AG04449 (cell line): ENCODE measurements at regions of chr1 and their contacts with region 1.

Region 1: DNA sequence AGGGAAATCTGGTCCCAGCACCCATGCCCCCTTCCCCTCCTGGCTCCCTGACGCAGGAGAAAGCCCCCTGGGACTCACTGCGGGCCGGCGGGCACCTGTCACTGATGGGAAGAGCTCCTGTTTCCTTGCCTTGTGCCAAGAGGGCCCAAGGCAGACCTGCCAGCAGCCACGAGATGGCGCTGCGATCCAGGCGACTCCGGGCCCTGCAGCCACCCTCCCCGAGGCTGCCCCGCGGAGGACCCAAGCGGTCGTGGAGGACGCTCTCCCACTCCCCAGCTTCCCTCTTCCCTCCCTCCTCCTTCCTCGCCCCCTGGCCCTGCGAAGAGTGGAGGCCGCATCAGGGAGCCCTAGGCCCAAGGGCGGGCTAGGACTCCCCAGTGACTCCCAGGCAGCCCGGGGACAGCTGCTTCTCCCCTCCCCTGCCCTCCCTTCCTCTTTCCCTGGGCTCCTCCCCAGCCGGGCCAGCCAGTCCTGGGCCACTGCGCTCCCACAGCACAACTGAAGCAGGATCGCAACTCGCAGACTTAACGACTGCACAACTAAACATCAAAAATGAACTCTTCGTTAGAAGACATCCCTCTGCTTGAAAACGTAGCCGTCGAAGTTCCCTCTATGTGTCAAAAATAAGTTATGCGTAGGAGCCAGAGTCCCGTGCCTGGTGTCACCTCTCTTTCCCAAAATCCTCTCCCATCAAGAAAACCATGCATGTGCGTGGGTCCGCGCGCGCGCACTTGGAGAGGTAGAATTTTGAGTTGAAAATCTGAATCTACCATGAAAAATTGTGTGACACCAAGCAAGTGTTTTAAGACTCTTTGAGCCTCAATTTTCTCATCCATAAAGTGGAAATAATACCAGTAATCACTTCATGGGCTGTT is 34.2 kb downstream of the BATF3 start:
- DNase-seq: no peak
- H3K4me3 ChIP-seq: peak overlapping the region; percentile 80
- CTCF ChIP-seq: peak; percentile 99

Region 2: DNA sequence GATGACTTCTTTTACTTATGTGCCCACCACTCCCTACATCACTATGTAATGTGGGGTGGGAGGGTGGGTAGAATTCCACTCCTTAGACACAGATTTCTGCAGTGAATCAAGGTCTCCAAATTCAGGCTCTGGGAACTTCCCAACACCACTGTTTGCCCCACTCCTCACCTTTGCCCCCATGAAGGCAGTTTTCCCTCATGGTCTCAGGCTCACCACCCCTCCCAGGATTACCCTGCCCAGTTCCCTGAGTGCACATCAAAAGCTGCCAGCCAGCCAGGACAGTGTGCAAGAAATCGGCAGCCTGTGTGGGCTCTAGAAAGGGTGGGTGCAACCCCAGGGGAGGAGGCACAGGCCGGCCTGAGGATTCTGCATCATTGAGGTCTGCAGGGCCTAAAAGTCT is 218.0 kb before region 1 on chr1:
- CTCF ChIA-PET with region 1: no interaction called
- POLR2A ChIA-PET with region 1: no interaction called
- DNase-seq: no peak
- H3K4me3 ChIP-seq: no peak overlapping the region
- CTCF ChIP-seq: no peak

Region 3: GRCh38 chr1:212477014-212477679 is 188.3 kb before region 1 on chr1:
- CTCF ChIA-PET with region 1: interaction called, 23 read pairs
- POLR2A ChIA-PET with region 1: no interaction called
- DNase-seq: peak; percentile 38
- H3K4me3 ChIP-seq: no peak overlapping the region
- CTCF ChIP-seq: peak; percentile 91

Region 4: DNA sequence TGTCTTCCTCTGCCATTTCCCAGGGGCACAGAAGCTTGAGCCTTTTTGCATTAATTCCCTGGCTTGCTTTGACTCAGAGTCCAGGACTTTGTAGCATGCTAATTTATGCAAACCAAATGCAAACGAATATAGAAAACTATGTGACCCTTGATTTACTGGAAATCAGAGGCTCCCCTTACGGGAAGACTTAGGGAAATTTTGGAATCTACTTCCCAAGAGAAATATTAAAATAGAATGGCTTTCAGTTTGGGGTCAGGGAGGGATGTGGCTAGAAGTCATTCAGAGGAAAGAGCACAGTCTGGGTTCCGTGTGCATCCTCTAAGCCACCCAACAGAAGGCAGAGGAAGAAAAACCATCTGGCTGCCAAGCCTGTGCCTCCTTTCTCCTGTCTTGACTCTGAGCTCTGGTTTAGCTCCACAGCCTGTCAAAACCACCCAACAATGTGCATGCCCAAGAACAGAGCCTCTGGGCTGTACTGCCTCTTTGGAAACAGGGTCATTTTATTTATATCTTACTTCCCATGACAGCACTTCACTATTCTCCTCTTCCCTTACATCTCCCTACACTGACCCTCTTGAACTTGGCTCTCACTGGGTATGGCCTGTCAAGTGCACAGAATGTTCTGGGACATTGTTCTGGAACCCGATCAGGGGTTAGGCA is 26.9 kb before region 1 on chr1:
- CTCF ChIA-PET with region 1: interaction called, 14 read pairs
- POLR2A ChIA-PET with region 1: no interaction called
- DNase-seq: peak; percentile 65
- H3K4me3 ChIP-seq: no peak overlapping the region; the same call in none of the 2 replicates
- CTCF ChIP-seq: no peak

Region 5: DNA sequence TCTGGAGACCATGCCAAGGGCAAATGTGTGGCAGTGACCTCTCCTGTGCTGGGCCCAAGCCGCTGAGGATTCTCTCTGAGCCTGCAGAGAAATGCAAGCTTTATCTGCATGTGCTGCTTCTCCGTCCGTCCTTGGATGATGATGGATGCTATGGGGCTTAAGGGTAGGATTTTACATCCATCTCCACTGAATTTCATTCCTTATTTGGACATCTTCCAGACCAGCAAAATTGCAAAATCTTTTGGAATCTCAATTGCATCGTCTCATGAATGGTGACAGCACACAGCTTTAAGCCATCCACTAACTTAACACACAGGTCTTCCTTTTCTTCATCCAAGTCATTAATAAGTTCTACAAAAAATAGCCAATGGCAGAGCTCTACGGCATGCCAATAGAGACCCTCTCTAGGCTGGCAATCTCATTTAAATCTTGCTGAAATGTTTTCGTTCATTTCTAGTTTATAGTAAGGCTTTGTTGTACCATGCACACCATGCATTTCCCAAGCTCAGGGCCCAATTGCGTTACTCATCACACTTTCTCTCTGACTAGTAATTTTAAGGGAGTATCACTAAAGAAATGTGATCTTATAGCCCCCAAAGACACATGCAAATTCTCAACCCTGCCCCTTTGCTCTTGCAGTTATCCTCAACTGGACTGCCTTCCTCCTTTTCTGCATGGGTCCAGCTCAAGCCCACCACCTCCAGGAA is 23.0 kb after region 1 on chr1:
- CTCF ChIA-PET with region 1: interaction called, 10 read pairs
- POLR2A ChIA-PET with region 1: no interaction called
- DNase-seq: no peak
- H3K4me3 ChIP-seq: no peak overlapping the region
- CTCF ChIP-seq: no peak

Region 6: DNA sequence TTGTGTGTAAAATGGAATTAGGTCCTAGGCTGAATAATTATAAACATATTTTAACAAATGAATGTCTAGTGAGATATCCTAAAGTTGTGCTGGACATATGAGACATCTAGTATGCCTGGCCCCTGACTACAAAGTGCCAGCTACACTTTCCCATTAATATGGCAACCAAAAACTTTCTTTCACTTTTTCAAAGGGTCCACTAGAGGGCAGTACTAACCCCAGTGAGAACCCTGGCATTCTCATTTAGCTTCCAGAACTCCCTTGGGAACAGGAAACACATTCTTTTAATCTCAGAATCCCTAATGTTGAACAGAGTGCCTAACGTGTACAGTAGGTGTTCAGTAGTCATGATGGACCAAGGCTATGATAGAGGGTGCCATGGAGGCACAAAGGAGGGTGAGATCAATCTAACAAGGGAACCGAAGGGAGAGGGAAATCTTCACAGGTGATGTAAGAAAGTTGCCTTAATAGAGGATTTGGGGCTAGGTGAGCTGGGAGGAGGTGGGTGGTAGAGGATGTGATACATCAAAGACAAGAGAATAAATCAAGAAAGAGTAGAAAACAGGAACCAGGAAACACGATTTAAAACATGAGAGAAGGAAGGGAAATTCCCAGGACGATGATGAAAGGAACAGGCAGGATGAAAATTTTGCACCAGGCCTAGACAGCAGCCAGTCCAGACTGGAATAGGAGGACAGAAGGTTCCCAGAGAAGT is 84.5 kb after region 1 on chr1:
- CTCF ChIA-PET with region 1: interaction called, 22 read pairs
- POLR2A ChIA-PET with region 1: no interaction called
- DNase-seq: no peak
- H3K4me3 ChIP-seq: no peak overlapping the region
- CTCF ChIP-seq: peak; percentile 43

Region 7: DNA sequence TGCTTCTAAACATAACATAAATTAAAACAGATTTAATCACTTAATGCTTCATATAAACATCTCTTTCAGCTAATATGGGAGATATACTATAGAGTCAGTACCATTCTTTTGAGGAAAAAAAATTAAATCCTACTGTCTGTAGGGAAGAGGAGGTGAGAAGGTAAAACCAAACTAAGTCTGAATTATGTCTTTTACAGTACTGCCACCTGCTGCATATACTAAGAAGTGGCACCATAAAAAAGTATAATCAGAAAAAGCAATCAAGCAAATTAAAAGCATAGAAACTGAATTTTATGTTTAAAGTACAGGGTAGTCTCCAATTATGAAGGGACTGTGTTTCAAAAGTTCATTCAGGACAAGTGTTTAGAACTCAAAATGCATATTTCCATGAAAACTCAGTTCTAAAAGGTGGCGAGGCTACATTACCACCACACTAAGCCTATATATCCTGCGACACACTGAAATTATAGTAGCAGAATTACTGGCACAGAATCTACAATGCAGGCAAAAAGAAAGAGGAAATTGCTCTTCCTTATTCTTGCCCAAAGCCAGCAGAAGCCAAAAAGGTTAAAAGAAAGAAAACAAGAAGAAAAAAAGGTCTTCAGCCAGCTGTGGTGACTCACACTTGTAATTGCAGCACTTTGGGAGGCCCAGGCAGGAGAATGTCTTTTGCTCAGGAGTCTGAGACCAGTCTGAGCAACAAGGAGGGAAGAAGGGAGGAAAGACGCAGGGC is 117.1 kb after region 1 on chr1:
- CTCF ChIA-PET with region 1: interaction called, 62 read pairs
- POLR2A ChIA-PET with region 1: interaction called, 3 read pairs
- DNase-seq: no peak
- H3K4me3 ChIP-seq: no peak overlapping the region
- CTCF ChIP-seq: peak; percentile 36

Region 8: DNA sequence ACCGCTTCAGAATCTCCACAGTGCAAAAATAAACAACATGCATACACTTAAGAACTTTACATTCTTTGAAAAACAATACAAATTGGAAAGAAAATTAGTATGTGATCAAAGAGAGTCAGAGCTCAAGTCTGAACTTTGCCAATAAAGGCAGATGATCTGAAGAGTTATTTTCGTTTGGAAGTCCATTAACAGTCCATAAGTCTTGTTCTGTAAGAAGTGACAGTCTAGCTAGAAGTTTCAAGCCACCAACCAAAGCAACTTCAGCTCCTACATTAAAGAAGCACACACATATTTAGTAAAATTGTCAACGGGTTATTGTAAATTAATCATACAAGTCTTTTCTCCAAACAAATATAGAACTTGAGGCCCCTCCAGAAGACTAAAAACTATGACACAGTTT is 329.4 kb after region 1 on chr1:
- CTCF ChIA-PET with region 1: interaction called, 55 read pairs
- POLR2A ChIA-PET with region 1: no interaction called
- DNase-seq: no peak
- H3K4me3 ChIP-seq: no peak overlapping the region
- CTCF ChIP-seq: no peak